ENCODE measurements at regions of chr10 and their contacts with region 1.

Region 1: GRCh38 chr10:113385021-113385999 is 167.5 kb upstream of the HABP2 start:
- DNase-seq: peak; percentile 71
- ATAC-seq: peak; percentile 96
- H3K4me3 Mint-ChIP-seq: no peak overlapping the region
- H3K27ac Mint-ChIP-seq: no peak overlapping the region
- H3K4me1 Mint-ChIP-seq: peaks cover 19% of the 10 kb centered on the region
- H3K27me3 Mint-ChIP-seq: peaks cover 5% of the 10 kb centered on the region

Region 2: GRCh38 chr10:112565434-112566053 is 819.8 kb before region 1 on chr10:
- CTCF ChIA-PET with region 1: no interaction called
- POLR2A ChIA-PET with region 1: no interaction called
- intact Hi-C with region 1: loop called in 1 of 2 experiments (anchors 2 kb)
- DNase-seq: peak; percentile 22
- ATAC-seq: peak; percentile 49
- H3K4me3 Mint-ChIP-seq: no peak overlapping the region
- H3K27ac Mint-ChIP-seq: no peak overlapping the region
- H3K4me1 Mint-ChIP-seq: no peaks in the 10 kb centered on the region
- H3K27me3 Mint-ChIP-seq: no peaks in the 10 kb centered on the region

Region 3: GRCh38 chr10:112721080-112721698 is 664.1 kb before region 1 on chr10:
- CTCF ChIA-PET with region 1: interaction called, 8 read pairs
- POLR2A ChIA-PET with region 1: no interaction called
- intact Hi-C with region 1: loop called (anchors 1 to 10 kb)
- DNase-seq: no peak
- ATAC-seq: peak; percentile 51
- H3K4me3 Mint-ChIP-seq: no peak overlapping the region
- H3K27ac Mint-ChIP-seq: no peak overlapping the region
- H3K4me1 Mint-ChIP-seq: no peaks in the 10 kb centered on the region
- H3K27me3 Mint-ChIP-seq: no peaks in the 10 kb centered on the region

Region 4: DNA sequence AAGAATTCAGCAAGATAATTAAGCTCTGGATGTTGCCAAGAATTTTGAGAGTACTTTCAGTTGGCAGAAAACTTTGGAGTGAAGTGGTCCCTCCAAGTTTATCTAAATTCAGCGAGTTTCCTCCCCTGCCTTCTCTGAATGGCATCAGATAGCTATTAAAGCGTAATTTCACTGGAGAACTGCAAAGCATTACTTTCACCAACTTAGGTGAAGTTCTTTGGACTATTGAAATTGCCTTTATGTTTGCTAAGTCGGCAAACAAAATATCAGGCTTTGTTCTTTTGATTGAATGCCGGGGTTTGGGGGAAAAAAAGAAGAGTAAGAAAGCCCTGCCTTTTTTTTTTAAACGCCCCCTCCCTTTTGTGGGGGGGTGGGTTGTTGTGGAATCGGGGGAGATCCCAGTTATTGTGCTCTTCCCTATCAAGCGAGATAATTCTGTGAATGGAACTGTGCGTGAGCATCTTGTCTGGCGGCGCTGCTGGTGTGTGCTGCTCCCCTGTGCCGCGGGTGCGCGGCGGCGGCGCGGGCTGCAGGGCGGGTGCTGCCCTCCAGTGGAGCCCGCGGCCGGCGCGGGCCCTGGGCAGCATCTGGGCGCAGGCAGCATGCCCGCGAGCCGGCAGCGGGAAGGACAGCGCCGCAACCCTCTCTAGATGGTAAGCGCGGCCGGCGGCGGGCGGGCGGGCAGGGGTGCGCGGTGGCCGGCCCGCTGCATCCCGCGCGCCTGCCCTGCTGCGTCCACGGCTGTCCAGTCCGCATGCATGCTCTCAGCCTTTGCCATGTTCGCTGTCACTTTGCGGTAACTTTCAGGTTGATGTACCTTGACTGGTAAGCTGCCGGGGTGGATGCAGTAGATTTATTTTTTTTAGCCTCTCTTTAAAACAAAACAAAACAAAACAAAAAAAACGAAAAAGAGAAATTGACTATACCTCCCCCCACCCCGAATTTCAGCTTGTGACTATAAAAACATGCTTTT is 258.8 kb before region 1 on chr10:
- CTCF ChIA-PET with region 1: interaction called, 3 read pairs
- POLR2A ChIA-PET with region 1: no interaction called
- intact Hi-C with region 1: loop called (anchors 1 to 10 kb)
- DNase-seq: peak; percentile 76
- ATAC-seq: peak; percentile 90
- H3K4me3 Mint-ChIP-seq: peak overlapping the region; percentile 28
- H3K27ac Mint-ChIP-seq: no peak overlapping the region
- H3K4me1 Mint-ChIP-seq: peaks cover 6% of the 10 kb centered on the region
- H3K27me3 Mint-ChIP-seq: peaks cover 44% of the 10 kb centered on the region

Region 5: DNA sequence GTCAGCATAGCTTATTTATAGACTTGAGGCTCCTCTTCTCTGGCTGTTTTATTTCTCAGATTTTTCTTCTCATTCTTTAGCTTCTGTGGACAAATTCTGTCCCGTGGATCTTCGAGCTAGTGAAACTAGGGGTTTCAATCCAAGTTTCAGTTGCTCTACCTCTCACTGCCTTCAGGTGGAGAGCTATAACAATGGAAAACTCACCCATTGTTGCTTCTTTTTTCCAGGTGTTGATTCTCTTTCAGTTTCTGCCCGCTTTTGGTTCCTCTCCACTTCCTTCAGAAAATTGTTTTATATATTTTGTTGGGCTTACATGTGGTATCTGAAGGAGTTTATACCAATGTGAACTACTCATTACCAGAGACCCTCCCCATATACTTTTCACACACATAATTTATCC is 169.2 kb before region 1 on chr10:
- CTCF ChIA-PET with region 1: interaction called, 5 read pairs
- POLR2A ChIA-PET with region 1: no interaction called
- intact Hi-C with region 1: loop called in 1 of 2 experiments (anchors 2 kb)
- DNase-seq: no peak
- ATAC-seq: no peak
- H3K4me3 Mint-ChIP-seq: no peak overlapping the region
- H3K27ac Mint-ChIP-seq: no peak overlapping the region
- H3K4me1 Mint-ChIP-seq: no peaks in the 10 kb centered on the region
- H3K27me3 Mint-ChIP-seq: peaks cover 14% of the 10 kb centered on the region